ENCODE measurements at regions of chrX and their contacts with region 1.

Region 1: DNA sequence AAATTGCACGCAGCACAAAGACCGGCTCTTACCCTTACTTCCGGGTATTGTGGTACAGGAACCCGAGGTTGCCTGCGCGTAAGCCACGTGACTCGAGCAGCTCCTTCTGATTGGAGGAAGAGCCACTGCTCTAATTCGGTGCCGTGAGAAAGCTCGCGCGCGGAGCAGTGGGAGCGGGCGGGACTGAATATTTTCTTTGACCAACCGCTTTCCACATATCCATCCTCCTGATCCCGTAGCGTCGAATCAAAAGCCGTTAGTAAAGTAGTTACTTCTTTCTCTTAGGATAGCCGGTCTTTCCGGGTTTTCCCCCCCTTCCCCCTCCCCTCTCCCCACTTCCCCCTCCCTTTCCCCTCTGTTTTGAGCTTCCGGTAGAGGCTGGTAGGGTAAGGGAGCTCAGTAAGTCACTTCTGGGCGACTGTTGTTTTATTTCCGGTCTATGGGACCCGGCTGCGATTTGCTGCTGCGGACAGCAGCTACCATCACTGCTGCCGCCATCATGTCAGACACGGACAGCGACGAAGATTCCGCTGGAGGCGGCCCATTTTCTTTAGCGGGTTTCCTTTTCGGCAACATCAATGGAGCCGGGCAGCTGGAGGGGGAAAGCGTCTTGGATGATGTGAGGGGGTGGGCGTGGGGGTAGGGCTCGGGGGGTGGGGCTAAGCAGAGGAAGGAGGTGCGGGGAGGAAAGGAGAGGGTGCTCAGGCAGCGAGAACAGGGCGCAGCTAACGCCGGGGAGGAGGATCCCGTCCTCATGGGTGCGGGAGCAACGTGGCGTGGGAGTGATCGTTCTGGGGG is at the start of gene TAF1:
- DNase-seq: peak; percentile 69
- ATAC-seq: peak; percentile 87
- H3K4me3 Mint-ChIP-seq: peak within 1 kb of the TSS; percentile 99
- H3K27ac Mint-ChIP-seq: peak within 1 kb of the TSS; percentile 99
- H3K4me1 Mint-ChIP-seq: peaks cover 21% of the 10 kb centered on the region
- H3K27me3 Mint-ChIP-seq: no peaks in the 10 kb centered on the region
- CTCF ChIP-seq: no peak
- total RNA-seq, gene TAF1: 64.0 and 70.0 TPM in 2 replicates

Region 2: DNA sequence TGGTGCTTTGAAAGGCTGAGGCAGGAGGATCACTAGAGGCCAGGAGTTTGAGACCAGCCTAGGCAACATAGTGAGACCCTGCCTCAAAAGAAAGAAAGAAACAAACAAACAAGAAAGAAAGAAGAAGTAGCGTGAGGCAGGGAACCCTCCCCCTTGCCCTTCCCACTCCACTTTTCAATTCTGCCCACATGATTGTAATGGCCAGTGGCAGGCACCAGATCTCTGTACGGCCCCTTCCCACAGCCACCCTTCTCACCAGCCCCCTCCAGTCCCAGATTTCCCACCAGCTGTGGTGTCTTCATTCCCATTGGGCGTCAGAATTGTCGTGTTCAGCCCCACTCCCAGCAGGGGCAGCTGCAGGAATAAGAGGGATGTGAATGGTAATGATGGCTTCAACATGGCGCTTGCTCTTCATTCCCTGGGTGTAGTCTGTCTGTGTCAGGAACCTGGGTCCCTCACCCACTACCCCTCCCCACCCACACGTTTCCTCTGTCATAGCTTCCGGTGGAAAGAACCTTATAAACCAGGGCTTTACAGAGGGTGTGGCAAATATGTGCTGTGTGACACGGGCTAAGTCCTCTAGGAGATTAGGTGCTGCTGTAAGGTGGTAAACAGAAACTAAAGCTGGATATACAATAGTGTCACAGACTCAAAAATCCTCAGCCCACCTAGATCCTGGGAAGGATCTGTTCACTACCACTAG is 254.8 kb before region 1 on chrX and contains the start of gene IL2RG:
- CTCF ChIA-PET with region 1: no interaction called
- POLR2A ChIA-PET with region 1: interaction called, 21 read pairs
- intact Hi-C with region 1: no loop called
- DNase-seq: peak; percentile 37
- ATAC-seq: peak; percentile 90
- H3K4me3 Mint-ChIP-seq: peak within 1 kb of the TSS; percentile 95
- H3K27ac Mint-ChIP-seq: peak within 1 kb of the TSS; percentile 99
- H3K4me1 Mint-ChIP-seq: peaks cover 67% of the 10 kb centered on the region
- H3K27me3 Mint-ChIP-seq: no peaks in the 10 kb centered on the region
- CTCF ChIP-seq: no peak
- total RNA-seq, gene IL2RG: 261 and 264 TPM in 2 replicates

Region 3: GRCh38 chrX:71118032-71118984 is 247.8 kb before region 1 on chrX and contains the start of gene MED12:
- CTCF ChIA-PET with region 1: no interaction called
- POLR2A ChIA-PET with region 1: interaction called, 23 read pairs
- intact Hi-C with region 1: no loop called
- DNase-seq: peak; percentile 76
- ATAC-seq: peak; percentile 96
- H3K4me3 Mint-ChIP-seq: peak within 1 kb of the TSS; percentile 85
- H3K27ac Mint-ChIP-seq: peak within 1 kb of the TSS; percentile 89
- H3K4me1 Mint-ChIP-seq: peaks cover 16% of the 10 kb centered on the region
- H3K27me3 Mint-ChIP-seq: no peaks in the 10 kb centered on the region
- CTCF ChIP-seq: no peak
- total RNA-seq, gene MED12: 81.7 and 102 TPM in 2 replicates

Region 4: GRCh38 chrX:71198066-71198465 is 168.0 kb before region 1 on chrX:
- CTCF ChIA-PET with region 1: no interaction called
- POLR2A ChIA-PET with region 1: interaction called, 25 read pairs
- intact Hi-C with region 1: loop called (anchors 5 kb)
- DNase-seq: peak; percentile 13
- ATAC-seq: peak; percentile 84
- H3K4me3 Mint-ChIP-seq: peak overlapping the region; percentile 95
- H3K27ac Mint-ChIP-seq: peak overlapping the region; percentile 95
- H3K4me1 Mint-ChIP-seq: peaks cover 32% of the 10 kb centered on the region
- H3K27me3 Mint-ChIP-seq: no peaks in the 10 kb centered on the region
- CTCF ChIP-seq: no peak

Region 5: DNA sequence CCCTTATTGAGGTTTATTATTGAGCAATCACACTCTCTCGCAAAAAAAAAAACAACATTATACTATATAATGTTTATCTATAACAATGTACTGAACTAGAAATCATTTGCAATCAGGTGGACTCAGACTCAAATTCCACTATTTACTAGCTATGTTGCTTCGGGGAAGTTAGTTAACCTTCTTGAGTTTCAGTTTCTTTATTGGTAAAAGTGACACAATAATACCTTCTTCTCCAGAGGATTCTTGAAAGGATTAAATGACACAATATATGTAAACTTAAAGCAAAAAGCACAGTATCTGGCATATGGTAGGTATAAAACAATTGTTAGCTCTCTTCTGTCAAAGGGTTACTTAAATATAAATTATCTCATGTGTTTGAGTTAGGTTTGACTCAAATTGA is 1238.0 kb after region 1 on chrX:
- CTCF ChIA-PET with region 1: no interaction called
- POLR2A ChIA-PET with region 1: no interaction called
- intact Hi-C with region 1: no loop called
- DNase-seq: no peak
- ATAC-seq: no peak
- H3K4me3 Mint-ChIP-seq: no peak overlapping the region
- H3K27ac Mint-ChIP-seq: no peak overlapping the region
- H3K4me1 Mint-ChIP-seq: no peaks in the 10 kb centered on the region
- H3K27me3 Mint-ChIP-seq: no peaks in the 10 kb centered on the region
- CTCF ChIP-seq: no peak

Measured in activated B cell treated with CpG ODN at 0.5 μM for 24 hours (primary cell).